Right ventricle myocardium inferior (tissue), 1 donor: ENCODE measurements at regions of chr14 and their contacts with region 1.

Region 1: DNA sequence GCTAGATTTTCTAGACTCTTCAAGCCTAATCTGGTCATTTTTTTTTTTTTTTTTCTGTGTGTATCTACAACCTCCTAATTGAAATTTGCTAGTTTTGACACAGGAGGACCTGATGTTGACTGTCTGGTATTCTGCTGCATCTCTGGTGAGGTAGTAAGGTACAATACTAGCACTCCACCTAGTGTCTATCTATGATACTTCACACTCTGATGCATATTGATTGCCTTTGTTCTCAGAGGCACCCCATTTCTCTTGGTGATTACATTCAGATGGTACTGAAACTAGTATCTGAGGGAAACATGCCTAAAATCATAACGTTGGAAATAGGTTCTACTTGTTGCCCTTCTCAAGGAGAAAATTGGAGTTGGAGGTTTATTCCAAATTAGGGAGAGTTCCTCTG is 930.5 kb upstream of the NOVA1 start:
- DNase-seq: no peak
- ATAC-seq: peak; percentile 39

Region 2: GRCh38 chr14:26255213-26255612 is 1273.1 kb before region 1 on chr14:
- intact Hi-C with region 1: loop called (anchors 10 kb)
- DNase-seq: no peak
- ATAC-seq: peak; percentile 34

Region 3: DNA sequence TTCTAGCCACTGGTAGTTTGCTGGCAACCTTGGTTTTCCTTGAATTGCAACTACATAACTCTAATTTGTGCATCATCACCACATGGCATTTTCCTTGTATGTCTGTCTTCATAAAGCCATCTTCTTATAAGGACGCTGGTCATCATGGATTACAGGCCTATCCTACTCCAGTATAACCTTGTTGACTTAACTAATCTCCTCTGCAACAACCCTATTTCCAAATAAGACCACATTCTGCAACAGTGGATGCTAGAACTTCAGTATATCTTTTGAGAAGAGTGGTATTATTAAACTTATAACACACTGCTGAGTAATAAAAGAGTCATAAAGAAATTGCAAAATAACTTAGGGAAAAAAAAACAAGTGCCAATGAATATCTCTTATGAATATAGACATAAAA is 726.4 kb after region 1 on chr14:
- intact Hi-C with region 1: no loop called
- DNase-seq: no peak
- ATAC-seq: no peak